ENCODE measurements at regions of chr6 and their contacts with region 1.

Region 1: GRCh38 chr6:147322299-147323162 is 118.3 kb downstream of the STXBP5 start:
- DNase-seq: peak; percentile 60
- H3K4me3 Mint-ChIP-seq: peak overlapping the region; percentile 71
- H3K27ac Mint-ChIP-seq: peak overlapping the region; percentile 92
- H3K4me1 Mint-ChIP-seq: peaks cover 19% of the 10 kb centered on the region
- H3K27me3 Mint-ChIP-seq: no peaks in the 10 kb centered on the region

Region 2: GRCh38 chr6:146850238-146850896 is 472.2 kb before region 1 on chr6:
- CTCF ChIA-PET with region 1: no interaction called
- intact Hi-C with region 1: loop called (anchors 1 kb)
- DNase-seq: peak; percentile 72
- H3K4me3 Mint-ChIP-seq: no peak overlapping the region
- H3K27ac Mint-ChIP-seq: peak overlapping the region; percentile 71
- H3K4me1 Mint-ChIP-seq: peaks cover 31% of the 10 kb centered on the region
- H3K27me3 Mint-ChIP-seq: peaks cover 7% of the 10 kb centered on the region

Region 3: GRCh38 chr6:147194652-147195411 is 127.7 kb before region 1 on chr6:
- CTCF ChIA-PET with region 1: no interaction called
- intact Hi-C with region 1: loop called (anchors 1 kb)
- DNase-seq: no peak
- H3K4me3 Mint-ChIP-seq: peak overlapping the region; percentile 25
- H3K27ac Mint-ChIP-seq: peak overlapping the region; percentile 88
- H3K4me1 Mint-ChIP-seq: peaks cover 22% of the 10 kb centered on the region
- H3K27me3 Mint-ChIP-seq: no peaks in the 10 kb centered on the region

Region 4: DNA sequence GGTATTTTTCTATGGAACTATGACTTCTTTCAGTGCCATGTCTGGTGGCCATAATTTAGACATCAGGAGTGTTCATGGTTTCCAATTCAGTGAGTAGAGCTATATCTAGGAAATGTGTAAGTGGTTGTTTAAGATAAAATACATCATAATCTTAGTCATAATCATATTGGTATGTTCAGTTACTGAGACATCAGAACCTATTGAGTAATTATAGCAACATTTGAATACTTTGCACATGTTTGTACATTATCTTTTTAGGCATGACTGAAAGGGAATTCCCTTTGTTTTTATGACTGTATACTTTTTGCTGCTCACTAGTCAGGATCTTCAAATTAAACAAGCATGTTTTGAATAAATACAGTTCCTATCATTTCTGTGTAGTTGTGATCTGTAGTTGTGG is 54.3 kb before region 1 on chr6:
- CTCF ChIA-PET with region 1: no interaction called
- intact Hi-C with region 1: loop called (anchors 1 kb)
- DNase-seq: no peak
- H3K4me3 Mint-ChIP-seq: no peak overlapping the region
- H3K27ac Mint-ChIP-seq: peak overlapping the region; percentile 83
- H3K4me1 Mint-ChIP-seq: peaks cover 17% of the 10 kb centered on the region
- H3K27me3 Mint-ChIP-seq: no peaks in the 10 kb centered on the region

Region 5: GRCh38 chr6:147337921-147338320 is 15.4 kb after region 1 on chr6:
- CTCF ChIA-PET with region 1: no interaction called
- intact Hi-C with region 1: no loop called
- DNase-seq: no peak
- H3K4me3 Mint-ChIP-seq: no peak overlapping the region
- H3K27ac Mint-ChIP-seq: no peak overlapping the region
- H3K4me1 Mint-ChIP-seq: no peaks in the 10 kb centered on the region
- H3K27me3 Mint-ChIP-seq: no peaks in the 10 kb centered on the region

Region 6: DNA sequence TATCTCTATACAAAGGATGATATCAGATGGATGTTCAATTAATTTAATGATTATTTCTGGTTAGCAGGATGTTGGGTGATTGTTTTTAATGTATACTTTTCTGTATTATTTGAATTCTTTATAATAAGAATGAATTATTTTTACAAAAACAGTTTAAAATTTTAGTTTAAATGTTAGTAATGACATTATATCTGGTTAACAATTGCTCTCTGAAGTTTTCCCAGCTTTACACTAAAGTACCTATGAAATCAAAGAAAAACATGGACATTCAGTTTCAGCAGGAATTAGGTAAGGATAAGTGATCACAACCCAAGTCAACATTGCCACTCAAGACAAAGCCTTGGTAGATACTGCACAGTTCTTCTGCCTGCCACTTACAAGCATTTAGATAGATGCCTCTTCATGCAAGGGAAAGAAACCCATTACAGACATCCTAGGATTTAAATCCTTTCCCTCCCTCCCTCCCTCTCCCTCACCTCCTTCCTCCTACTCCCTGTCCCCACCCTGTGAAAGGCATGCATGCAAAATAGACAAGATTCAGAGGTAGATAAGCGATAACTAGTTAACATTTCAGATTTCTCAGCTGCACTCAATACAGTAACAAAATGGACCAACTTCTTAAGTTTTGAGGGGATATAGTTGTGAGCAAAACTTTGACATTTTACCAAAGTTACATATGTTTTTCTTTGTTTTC is 25.5 kb after region 1 on chr6:
- CTCF ChIA-PET with region 1: no interaction called
- intact Hi-C with region 1: no loop called
- DNase-seq: no peak
- H3K4me3 Mint-ChIP-seq: no peak overlapping the region
- H3K27ac Mint-ChIP-seq: no peak overlapping the region
- H3K4me1 Mint-ChIP-seq: peaks cover 2% of the 10 kb centered on the region
- H3K27me3 Mint-ChIP-seq: no peaks in the 10 kb centered on the region

Region 7: DNA sequence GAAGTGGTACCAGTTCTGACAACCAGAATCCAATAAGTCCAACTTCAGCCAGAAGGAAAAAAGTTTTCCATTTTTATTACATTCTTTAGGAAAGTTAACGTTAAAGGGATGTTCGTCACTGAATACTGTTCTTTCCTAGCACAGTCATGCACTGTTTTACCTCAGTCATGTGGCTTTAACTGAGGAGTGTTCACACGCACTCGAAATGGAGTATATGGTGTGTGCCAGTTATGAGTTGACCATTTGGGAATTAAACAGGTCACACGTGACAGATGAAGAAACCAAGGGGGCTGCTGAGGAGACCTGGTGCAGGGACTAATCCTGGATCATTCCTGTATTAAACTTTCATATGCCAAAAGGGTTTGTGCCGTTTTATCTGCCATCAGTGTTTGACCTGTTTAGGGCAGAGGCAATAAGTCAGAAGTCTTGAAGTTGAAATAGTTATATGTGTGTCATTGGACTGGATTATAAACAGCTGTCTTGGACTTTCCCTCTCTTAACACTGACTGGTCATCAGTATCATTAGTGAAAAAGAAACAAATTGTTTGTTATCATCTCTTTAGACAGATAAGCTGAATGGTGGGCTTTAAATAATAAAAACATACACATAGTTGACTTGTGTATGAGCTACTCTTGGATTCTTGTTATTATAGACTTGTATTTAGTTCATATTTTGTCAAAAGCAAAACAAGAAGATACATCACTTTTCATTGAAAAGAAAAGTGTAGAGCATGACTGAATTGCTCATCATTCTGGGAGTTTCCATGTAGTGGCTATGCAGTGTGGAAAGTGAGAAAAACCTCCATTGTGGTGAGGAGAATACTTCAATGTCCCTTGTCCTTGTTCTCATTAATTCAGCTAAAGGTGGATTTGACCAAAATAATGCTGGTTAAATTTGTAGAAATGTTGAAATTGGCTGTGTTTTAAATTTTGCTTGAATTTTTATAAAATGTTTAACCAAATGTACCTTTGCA is 62.5 kb after region 1 on chr6:
- CTCF ChIA-PET with region 1: no interaction called
- intact Hi-C with region 1: loop called (anchors 1 kb)
- DNase-seq: no peak
- H3K4me3 Mint-ChIP-seq: no peak overlapping the region
- H3K27ac Mint-ChIP-seq: no peak overlapping the region
- H3K4me1 Mint-ChIP-seq: peaks cover 13% of the 10 kb centered on the region
- H3K27me3 Mint-ChIP-seq: no peaks in the 10 kb centered on the region

Region 8: GRCh38 chr6:147423111-147423510 is 100.6 kb after region 1 on chr6:
- CTCF ChIA-PET with region 1: no interaction called
- intact Hi-C with region 1: no loop called
- DNase-seq: no peak
- H3K4me3 Mint-ChIP-seq: no peak overlapping the region
- H3K27ac Mint-ChIP-seq: no peak overlapping the region
- H3K4me1 Mint-ChIP-seq: no peaks in the 10 kb centered on the region
- H3K27me3 Mint-ChIP-seq: peaks cover 4% of the 10 kb centered on the region

Region 9: DNA sequence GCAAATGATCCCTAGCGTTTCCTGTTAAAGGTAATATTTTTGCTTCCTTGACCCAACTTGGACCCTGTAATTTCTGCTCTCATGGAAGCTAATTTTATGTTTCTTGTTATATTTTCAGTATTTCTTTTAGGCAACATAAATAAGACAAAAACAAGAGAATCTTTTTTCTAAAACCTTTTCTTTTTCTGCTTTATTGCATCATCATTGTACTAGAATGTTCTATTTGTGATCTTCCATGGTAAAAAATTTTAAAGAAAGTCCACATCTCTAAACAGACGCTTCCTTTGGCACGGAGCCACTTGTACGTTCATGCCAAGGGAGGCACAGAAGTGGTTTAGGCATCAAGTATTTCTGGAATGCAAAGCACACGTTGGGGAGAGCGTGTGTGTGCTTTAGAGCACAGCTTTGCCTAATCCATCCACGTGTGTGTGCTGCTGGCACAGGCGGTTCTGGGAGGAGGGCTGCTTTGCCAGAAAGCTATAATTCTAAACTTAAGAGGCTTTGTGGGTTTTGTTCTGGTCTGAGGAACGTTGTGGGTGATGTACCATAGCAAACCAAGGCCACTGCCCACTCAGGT is 1118.4 kb after region 1 on chr6:
- CTCF ChIA-PET with region 1: no interaction called
- intact Hi-C with region 1: loop called (anchors 5 kb)
- DNase-seq: no peak
- H3K4me3 Mint-ChIP-seq: no peak overlapping the region
- H3K27ac Mint-ChIP-seq: no peak overlapping the region
- H3K4me1 Mint-ChIP-seq: peaks cover 13% of the 10 kb centered on the region
- H3K27me3 Mint-ChIP-seq: peaks cover 12% of the 10 kb centered on the region

Region 10: DNA sequence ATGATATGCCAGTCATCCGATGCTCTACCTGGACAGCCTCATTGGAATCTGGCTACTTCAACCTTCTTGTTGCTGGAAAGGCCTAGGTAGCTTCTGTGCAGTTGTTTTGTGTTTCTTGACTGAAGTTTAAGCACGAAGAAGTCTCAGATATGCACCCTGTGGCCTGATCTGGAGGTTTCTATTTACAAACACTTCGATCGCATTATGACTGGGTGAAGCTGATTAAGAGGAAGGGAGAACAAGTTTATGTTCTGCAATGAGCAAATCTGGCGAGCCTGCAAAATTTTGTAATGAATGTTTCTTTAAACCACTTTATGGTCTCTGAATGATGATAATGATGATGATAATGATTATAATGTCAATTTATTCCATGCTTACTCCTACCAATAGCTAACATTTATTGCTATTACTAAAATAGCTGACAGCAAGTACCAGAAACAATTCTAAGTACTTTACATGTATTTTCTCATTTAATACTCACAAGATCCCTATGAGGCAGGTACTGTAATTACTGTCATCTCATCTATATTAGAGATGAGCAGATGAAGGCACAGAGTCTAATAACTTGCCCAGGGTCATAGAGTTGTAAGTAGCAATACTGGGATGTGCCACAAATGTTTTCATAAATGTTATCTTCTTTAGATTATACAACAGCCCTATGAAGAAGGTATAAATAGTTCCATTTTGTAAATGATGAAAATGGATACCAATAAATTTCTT is 1298.2 kb after region 1 on chr6:
- CTCF ChIA-PET with region 1: no interaction called
- intact Hi-C with region 1: no loop called
- DNase-seq: no peak
- H3K4me3 Mint-ChIP-seq: no peak overlapping the region
- H3K27ac Mint-ChIP-seq: no peak overlapping the region
- H3K4me1 Mint-ChIP-seq: no peaks in the 10 kb centered on the region
- H3K27me3 Mint-ChIP-seq: peaks cover 8% of the 10 kb centered on the region

Measured in activated naive CD4-positive, alpha-beta T cell treated with anti-CD3 and anti-CD28 coated beads for 36 hours (primary cell).